Ascending aorta (tissue), 2 donors: ENCODE measurements at regions of chr1 and their contacts with region 1.

Region 1: GRCh38 chr1:15760520-15761211 is 2.1 kb downstream of the FBLIM1 start:
- DNase-seq: peak in 1 of 2 donors; percentile 83
- H3K4me3 ChIP-seq: peak overlapping the region; percentile 86 to 89
- H3K27ac ChIP-seq: peak overlapping the region; percentile 93 to 96
- H3K4me1 ChIP-seq: peaks cover 17 to 49% of the 10 kb centered on the region in 2 donors
- H3K27me3 ChIP-seq: no peaks in the 10 kb centered on the region
- CTCF ChIP-seq: no peak

Region 2: GRCh38 chr1:15749399-15750291 is 11.0 kb before region 1 on chr1:
- intact Hi-C with region 1: loop called (anchors 1 kb)
- DNase-seq: peak; percentile 73 to 97
- H3K4me3 ChIP-seq: peak overlapping the region; percentile 48 to 56
- H3K27ac ChIP-seq: peak overlapping the region; percentile 96 to 98
- H3K4me1 ChIP-seq: peaks cover 31 to 61% of the 10 kb centered on the region in 2 donors
- H3K27me3 ChIP-seq: no peaks in the 10 kb centered on the region
- CTCF ChIP-seq: no peak

Region 3: GRCh38 chr1:15777909-15778707 is 17.4 kb after region 1 on chr1:
- intact Hi-C with region 1: loop called (anchors 2 kb)
- DNase-seq: no peak
- H3K4me3 ChIP-seq: no peak overlapping the region
- H3K27ac ChIP-seq: peak overlapping the region in 1 of 2 donors; percentile 16
- H3K4me1 ChIP-seq: no peaks in the 10 kb centered on the region
- H3K27me3 ChIP-seq: no peaks in the 10 kb centered on the region
- CTCF ChIP-seq: no peak